Vagina (tissue), 2 donors: ENCODE measurements at regions of chr11 and their contacts with region 1.

Region 1: GRCh38 chr11:121722431-121723245 is 269.9 kb upstream of the SORL1-AS1 start:
- DNase-seq: peak in 1 of 2 donors; percentile 93
- H3K4me3 ChIP-seq: peak overlapping the region; percentile 37 to 48
- H3K27ac ChIP-seq: peak overlapping the region; percentile 79
- H3K4me1 ChIP-seq: peaks cover 6% of the 10 kb centered on the region
- H3K27me3 ChIP-seq: no peaks in the 10 kb centered on the region
- CTCF ChIP-seq: no peak
- POLR2A ChIP-seq: peak in 1 of 2 donors; percentile 46

Region 2: DNA sequence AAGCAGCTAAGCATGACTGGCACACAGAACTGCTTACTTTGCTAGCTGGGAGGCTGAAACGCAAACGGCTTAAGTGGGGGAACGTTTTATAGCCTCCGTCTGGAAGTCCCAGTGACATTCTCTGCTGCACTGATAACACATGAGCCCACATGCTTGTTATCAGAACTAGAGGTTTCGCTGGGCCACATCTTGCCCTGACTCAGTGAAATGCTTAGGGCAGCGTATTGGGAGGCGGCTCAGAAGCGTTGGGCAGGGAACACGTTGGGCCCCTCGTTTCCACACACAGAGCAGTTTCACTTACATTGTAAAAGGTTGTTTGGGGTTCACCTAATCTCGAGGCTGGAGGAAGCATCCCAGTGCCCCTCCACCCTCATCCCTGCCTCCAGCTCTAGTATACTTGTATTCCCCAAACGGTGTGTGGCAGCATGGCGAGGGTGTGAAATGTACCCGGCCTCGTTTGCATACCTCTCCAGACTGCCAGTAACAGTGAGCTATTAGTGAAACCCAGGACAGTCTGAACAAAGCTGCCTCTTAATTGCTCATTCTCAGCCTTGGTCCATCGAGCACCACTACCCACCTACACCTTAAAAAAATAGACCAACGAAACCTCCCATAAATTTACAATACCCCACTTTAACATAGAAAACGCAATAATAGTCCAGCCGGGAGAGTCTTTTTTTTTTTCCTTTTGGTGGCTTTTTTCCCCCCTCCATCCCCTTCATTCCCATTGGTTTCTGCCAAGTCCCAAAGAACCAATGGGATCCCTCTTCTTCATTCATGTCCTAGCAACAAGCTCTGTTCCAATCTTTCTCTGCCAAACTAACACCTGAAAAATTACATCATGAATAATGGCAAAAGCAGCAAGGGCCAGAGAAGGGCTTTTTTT is 51.1 kb before region 1 on chr11:
- intact Hi-C with region 1: loop called (anchors 10 kb)
- DNase-seq: peak in 1 of 2 donors; percentile 84
- H3K4me3 ChIP-seq: peak overlapping the region in 1 of 2 donors; percentile 17
- H3K27ac ChIP-seq: peak overlapping the region; percentile 51
- H3K4me1 ChIP-seq: peaks cover 11% of the 10 kb centered on the region
- H3K27me3 ChIP-seq: no peaks in the 10 kb centered on the region
- CTCF ChIP-seq: no peak
- POLR2A ChIP-seq: no peak